ENCODE measurements at regions of chr5 and their contacts with region 1.

Region 1: DNA sequence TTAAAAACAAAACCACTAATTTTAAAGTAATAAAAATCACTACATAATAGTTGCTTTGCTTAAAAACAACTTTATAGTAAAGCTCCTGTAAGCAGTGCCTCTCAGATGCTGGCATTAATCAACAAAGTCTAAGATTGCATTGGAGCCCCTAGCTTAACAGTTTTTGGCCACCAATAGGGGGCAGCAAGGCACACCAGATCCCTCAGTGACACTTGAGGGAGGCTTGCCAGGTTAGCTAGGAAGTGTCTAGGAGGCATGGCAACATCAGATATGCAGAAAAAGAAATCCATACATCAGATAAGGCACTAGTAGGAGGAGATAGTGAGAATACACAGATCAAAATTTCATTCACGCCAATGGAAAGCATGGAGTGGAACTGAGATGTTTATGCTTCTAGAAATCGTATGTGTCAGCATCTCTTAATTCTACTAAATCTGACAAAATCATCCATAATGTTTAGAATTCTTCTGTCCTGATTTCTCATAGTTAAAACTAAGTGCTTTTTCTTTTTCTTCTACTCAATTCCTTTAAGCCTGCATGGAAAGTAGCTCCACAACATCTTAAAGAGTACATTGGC is 73.6 kb upstream of the PAM start:
- DNase-seq: peak; percentile 65 to 70
- H3K4me3 ChIP-seq: no peak overlapping the region
- H3K4me3 Mint-ChIP-seq: no peak overlapping the region
- H3K27ac Mint-ChIP-seq: no peak overlapping the region
- H3K4me1 ChIP-seq: no peaks in the 10 kb centered on the region
- H3K4me1 Mint-ChIP-seq: no peaks in the 10 kb centered on the region
- H3K27me3 ChIP-seq: no peaks in the 10 kb centered on the region
- H3K27me3 Mint-ChIP-seq: no peaks in the 10 kb centered on the region
- CTCF ChIP-seq: peak; percentile 63 to 70

Region 2: GRCh38 chr5:102971697-102972293 is 290.3 kb after region 1 on chr5:
- CTCF ChIA-PET with region 1: no interaction called
- POLR2A ChIA-PET with region 1: no interaction called
- intact Hi-C with region 1: loop called (anchors 1 kb)
- DNase-seq: peak in 1 of 2 experiments; percentile 6
- H3K4me3 ChIP-seq: no peak overlapping the region
- H3K4me3 Mint-ChIP-seq: no peak overlapping the region
- H3K27ac Mint-ChIP-seq: no peak overlapping the region
- H3K4me1 ChIP-seq: no peaks in the 10 kb centered on the region
- H3K4me1 Mint-ChIP-seq: no peaks in the 10 kb centered on the region
- H3K27me3 ChIP-seq: no peaks in the 10 kb centered on the region
- H3K27me3 Mint-ChIP-seq: no peaks in the 10 kb centered on the region
- CTCF ChIP-seq: peak in 1 of 2 experiments; percentile 47

Region 3: DNA sequence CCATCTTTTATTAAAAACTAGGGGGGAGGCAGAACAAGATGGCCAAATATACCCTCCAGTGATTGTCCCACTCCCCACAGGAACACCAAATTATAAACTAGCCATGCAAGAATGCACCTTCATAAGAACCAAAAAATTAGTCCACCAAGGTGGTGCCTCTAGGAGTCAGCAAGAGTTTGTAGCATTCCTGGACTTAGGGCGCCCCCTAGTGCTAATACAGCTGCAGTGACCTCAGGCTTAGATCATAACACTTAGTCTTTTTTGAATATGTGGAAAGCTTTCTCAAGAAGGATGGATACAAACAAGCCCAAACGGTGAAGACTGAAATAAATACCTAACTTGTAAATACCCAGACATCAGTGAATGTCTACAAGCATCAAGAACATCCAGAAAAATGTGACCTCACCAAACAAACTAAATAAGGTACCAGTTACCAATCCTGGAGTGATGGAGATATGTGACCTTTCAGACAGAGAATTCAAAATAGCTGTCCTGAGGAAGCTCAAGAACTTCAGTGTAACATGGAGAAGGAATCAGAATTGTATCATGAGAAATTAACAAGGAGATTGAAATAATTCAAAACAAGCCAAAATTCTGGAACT is 457.9 kb after region 1 on chr5:
- CTCF ChIA-PET with region 1: interaction called, 6 read pairs
- POLR2A ChIA-PET with region 1: no interaction called
- intact Hi-C with region 1: loop called (anchors 1 kb)
- DNase-seq: peak; percentile 78 to 84
- H3K4me3 ChIP-seq: no peak overlapping the region
- H3K4me3 Mint-ChIP-seq: no peak overlapping the region
- H3K27ac Mint-ChIP-seq: no peak overlapping the region
- H3K4me1 ChIP-seq: peaks cover 22% of the 10 kb centered on the region
- H3K4me1 Mint-ChIP-seq: no peaks in the 10 kb centered on the region
- H3K27me3 ChIP-seq: no peaks in the 10 kb centered on the region
- H3K27me3 Mint-ChIP-seq: no peaks in the 10 kb centered on the region
- CTCF ChIP-seq: peak; percentile 92 to 93

Region 4: DNA sequence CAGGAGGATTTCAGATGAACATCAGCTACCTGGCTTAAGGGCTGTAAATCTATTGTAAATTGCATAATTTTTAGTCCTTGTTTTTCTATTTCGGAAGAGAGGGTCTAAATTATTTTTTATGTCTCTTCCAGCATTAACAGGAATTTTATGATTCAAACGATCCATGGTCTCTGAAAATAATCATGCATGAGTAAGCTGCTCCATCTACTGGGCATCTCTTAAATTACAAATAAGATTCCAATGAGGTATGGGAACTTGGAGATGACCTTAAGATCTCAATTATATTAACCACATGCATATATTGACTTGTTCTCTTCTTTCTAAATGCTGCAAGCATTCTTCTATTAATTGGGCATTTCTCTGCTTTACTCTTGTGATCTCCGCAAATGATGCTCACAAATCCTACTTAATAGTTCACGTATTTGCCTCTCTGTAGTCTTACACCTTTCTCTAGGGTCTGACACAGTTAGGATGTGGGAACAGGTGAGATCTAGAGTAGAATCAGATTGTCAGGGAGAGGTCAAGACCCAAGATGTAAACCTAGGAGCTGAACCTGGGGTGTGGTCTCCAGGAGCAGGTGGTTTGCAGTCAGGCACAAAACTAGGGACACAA is 794.2 kb after region 1 on chr5:
- CTCF ChIA-PET with region 1: no interaction called
- POLR2A ChIA-PET with region 1: no interaction called
- intact Hi-C with region 1: loop called (anchors 5 kb)
- DNase-seq: peak in 1 of 2 experiments; percentile 53
- H3K4me3 ChIP-seq: no peak overlapping the region
- H3K4me3 Mint-ChIP-seq: no peak overlapping the region
- H3K27ac Mint-ChIP-seq: no peak overlapping the region
- H3K4me1 ChIP-seq: peaks cover 8% of the 10 kb centered on the region; the same call in 1 of the 2 replicates
- H3K4me1 Mint-ChIP-seq: peaks cover 5% of the 10 kb centered on the region
- H3K27me3 ChIP-seq: no peaks in the 10 kb centered on the region
- H3K27me3 Mint-ChIP-seq: no peaks in the 10 kb centered on the region
- CTCF ChIP-seq: peak; percentile 51 to 65